Right cardiac atrium (tissue), 5 donors: ENCODE measurements at regions of chr1 and their contacts with region 1.

Region 1: DNA sequence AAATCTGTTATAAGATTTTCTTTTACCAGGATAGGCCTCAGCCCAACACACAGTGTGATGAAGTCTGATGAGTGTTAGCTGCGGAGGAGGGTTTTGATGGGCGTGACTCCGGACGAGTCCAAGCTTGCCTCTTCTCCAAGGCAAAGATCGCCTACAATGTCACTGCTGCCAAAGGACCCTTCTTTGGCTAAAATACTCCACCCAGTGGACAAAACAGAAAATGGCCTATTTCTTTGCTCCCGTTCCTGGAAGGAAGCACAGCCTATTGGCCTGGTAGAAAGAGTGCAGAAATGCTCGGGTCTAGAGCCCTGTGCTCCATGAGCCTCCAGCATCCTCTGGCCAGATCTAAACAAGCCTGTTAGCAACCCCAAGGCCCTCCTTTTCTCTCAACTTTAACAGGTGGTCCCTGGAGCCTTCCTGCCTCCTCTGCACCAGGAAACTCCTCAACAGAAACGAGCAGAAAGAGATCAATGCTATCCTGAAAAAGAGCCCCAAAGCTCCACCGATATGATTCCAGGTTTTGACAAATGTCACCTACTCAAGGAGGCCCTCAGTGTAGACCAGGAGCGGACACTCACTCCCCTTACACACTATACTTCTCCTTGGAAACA is 3.4 kb upstream of the CASQ2 start:
- DNase-seq: peak; percentile 70 to 78 (median 77)
- ATAC-seq: peak; percentile 89 to 91
- H3K4me3 ChIP-seq: peak overlapping the region; percentile 18
- H3K27ac ChIP-seq: peak overlapping the region; percentile 70
- H3K4me1 ChIP-seq: no peaks in the 10 kb centered on the region
- H3K27me3 ChIP-seq: no peaks in the 10 kb centered on the region

Region 2: DNA sequence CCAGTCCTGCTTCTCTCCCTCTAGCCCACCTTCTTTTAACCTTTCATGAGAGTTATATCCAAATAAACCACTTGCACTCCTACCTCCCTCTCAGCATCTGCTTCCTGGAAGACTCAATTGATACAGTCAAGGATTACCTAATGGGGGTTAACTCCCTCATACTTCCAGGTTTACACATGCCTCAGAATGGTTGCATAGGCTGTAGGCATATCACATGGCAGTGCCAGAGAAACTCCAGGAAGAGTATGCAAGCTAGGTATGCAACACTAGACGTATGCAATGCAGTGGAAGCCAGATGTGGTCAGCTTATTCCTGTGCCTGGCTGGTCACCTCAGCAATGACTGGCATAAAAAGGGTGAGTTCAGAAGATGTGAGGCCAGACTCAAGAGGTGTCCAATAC is 162.9 kb before region 1 on chr1:
- intact Hi-C with region 1: loop called (anchors 2 to 10 kb)
- DNase-seq: no peak
- ATAC-seq: no peak
- H3K4me3 ChIP-seq: no peak overlapping the region
- H3K27ac ChIP-seq: no peak overlapping the region
- H3K4me1 ChIP-seq: peaks cover 2% of the 10 kb centered on the region
- H3K27me3 ChIP-seq: no peaks in the 10 kb centered on the region

Region 3: GRCh38 chr1:115717541-115717940 is 54.4 kb before region 1 on chr1:
- intact Hi-C with region 1: loop called in 3 of 4 experiments (anchors 5 to 10 kb)
- DNase-seq: peak in 2 of 3 donors; percentile 50 to 84
- ATAC-seq: no peak
- H3K4me3 ChIP-seq: no peak overlapping the region
- H3K27ac ChIP-seq: no peak overlapping the region
- H3K4me1 ChIP-seq: no peaks in the 10 kb centered on the region
- H3K27me3 ChIP-seq: no peaks in the 10 kb centered on the region

Region 4: DNA sequence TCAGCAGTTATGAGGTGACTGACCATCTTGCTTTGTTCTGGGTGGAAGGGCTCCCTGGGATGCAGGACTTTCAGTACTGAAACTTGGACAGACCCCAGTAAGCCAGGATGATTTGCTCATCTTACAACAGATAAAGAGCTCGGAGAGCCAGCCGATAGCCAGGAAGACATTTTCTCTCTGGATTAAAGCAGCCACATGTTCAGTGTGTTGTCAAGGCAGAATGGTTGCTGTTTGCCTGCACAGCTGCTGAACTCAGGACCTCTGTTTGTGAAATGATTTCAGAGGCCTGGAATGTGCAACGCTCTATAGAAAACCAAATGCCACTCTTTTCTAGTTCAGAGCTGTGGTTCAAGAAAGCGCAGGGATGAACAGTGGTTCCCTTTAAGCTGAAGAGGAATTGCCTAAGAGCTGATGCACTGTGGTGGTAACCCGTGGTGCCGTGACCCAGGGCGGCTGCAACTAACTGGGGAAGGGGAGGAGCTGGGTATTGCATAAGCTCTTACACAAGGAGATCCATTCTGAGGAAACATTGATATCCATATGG is 44.2 kb before region 1 on chr1:
- intact Hi-C with region 1: loop called in 1 of 4 experiments (anchors 5 kb)
- DNase-seq: peak; percentile 81 to 87 (median 84)
- ATAC-seq: peak; percentile 89 to 91
- H3K4me3 ChIP-seq: no peak overlapping the region
- H3K27ac ChIP-seq: peak overlapping the region; percentile 65
- H3K4me1 ChIP-seq: peaks cover 2% of the 10 kb centered on the region
- H3K27me3 ChIP-seq: no peaks in the 10 kb centered on the region